ENCODE measurements at regions of chr10 and their contacts with region 1.

Region 1: GRCh38 chr10:14959276-14960057 is at the start of gene MEIG1:
- DNase-seq: peak; percentile 91 to 97
- H3K4me3 ChIP-seq: peak within 1 kb of the TSS; percentile 68
- H3K4me1 ChIP-seq: peaks cover 9% of the 10 kb centered on the region
- H3K27me3 ChIP-seq: no peaks in the 10 kb centered on the region

Region 2: DNA sequence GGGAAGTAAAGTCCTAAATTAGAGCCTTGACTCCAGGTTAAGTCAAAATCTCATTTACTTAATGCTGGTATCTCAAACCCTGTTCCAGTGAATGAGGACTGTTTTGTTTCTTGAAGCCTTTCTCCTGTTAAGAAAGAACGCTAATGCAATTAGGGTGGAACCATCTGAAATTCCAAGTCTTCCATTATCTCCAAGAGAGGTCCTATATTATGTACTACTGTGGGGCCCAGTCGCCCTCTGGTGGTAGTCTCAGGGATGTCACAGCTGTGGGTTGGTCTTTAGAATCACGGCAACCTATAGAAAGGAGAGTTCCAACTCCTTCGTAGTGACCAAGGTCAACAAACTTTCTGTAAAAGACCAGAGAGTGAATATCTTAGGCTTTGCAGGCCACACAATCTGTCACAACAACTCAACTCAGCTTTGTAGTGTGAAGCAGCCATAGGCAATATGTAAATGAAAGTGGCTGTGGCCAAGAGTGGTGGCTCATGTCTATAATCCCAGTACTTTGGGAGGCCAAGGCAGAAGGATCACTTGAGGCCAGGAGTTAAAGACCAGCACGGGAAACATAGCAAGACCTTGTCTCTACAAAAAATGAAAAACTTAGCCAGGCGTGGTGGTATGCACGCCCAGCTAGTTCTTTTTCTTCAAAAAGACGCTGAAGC is 147.0 kb after region 1 on chr10:
- in situ Hi-C with region 1: loop called (anchors 10 kb)
- DNase-seq: peak; percentile 67 to 85
- H3K4me3 ChIP-seq: no peak overlapping the region
- H3K4me1 ChIP-seq: 0 out of 2 replicates have a peak, but pooled peaks cover 2% of the 10 kb centered on the region
- H3K27me3 ChIP-seq: no peaks in the 10 kb centered on the region

Region 3: DNA sequence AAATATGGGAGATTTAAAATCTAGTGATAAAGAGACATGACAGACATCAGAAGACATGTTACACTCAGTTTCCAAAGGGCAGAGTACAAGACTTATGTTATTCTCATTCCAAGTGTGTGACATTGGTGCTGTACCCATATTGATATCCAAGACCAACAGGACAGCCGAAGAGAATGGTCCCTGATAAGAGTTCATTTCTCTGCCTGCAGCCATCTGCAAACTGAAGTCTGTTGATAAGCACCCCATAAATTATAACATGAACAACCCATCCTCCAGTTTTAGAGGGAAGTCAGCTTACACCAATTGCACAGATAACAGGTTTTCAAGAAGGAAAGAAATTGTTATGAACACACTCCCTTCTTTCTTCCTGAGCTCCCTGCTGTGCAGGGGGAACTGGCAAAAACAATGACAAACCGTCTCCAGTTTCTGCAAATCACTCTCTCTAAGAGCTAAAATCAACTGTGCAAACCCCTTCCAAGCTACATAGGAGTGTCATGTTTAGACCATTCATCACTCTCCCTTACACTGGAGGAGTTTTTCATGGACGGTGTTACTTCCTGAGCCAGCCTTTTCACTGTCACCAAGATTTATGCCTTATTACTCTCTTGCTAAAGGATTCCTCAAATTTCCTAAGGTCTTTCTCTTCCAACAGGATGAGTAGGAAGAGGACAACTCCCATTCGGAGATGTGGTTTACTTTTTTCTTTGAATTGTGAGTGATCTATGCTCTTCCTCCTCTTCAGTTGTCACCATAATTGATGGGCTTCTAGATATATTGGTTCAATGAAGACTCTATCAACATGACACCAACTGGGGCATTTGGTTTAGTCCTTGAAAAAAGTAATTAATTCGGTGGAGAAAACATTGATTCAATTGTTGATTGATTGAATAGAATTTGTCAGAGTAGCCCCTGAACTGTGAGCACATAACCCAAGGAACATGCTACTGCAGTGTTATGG is 491.9 kb after region 1 on chr10:
- in situ Hi-C with region 1: no loop called
- DNase-seq: no peak
- H3K4me3 ChIP-seq: no peak overlapping the region
- H3K4me1 ChIP-seq: no peaks in the 10 kb centered on the region
- H3K27me3 ChIP-seq: peaks cover 7% of the 10 kb centered on the region; the same call in 1 of the 2 replicates